ENCODE measurements at regions of chr14 and their contacts with region 1.

Region 1: DNA sequence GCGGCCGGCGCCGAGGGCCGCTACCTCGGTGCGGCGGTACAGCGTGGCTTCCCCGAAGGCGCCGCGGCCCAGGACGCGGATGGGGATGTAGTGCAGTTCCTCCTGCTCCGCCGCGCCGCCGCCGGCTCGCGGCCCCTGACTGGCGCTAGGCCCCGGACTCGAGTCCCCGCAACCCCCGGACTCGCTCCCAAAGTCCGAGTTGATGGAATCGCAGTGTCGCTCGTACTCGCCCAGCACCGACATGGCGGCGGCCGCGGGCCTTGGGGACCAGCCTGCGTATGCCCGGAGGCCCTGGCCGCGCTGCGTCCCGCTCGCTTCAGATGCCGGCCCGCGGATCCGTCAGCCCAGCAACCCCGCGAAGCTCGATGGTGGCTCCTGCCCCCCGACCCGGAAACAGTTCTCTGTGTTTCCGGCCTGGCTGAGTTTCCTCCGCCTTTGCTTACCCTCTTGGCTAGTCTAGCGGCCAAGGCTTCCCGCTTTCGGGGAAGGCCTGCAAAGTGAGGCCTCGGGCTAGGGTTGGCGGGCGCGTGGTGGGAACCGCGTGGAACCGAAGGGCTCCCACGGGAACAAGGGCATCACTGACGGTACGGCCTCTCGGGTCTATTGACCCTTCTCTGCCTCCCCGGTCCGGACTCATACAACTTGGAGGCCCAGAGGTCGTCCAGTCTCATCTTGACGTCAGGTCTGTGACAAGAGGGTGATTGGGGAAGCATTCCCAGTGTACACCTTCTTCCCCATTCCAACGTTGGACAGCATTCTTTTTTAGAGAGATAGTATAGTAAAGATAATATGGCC is at the start of gene NEK9:
- DNase-seq: peak; percentile 91 to 97
- H3K4me3 ChIP-seq: peak within 1 kb of the TSS; percentile 74 to 81 (median 76)
- H3K27ac ChIP-seq: peak within 1 kb of the TSS; percentile 94 to 98 (median 95)
- H3K4me1 ChIP-seq: peaks cover 26 to 48% (median 39%) of the 10 kb centered on the region in 4 donors
- H3K27me3 ChIP-seq: no peaks in the 10 kb centered on the region
- CTCF ChIP-seq: no peak
- EP300 ChIP-seq: no peak
- POLR2A ChIP-seq: no peak
- total RNA-seq, gene NEK9: 17.1 to 225 (median 49.1) TPM

Region 2: GRCh38 chr14:75063407-75064213 is 63.3 kb before region 1 on chr14 and contains the start of gene ACYP1:
- intact Hi-C with region 1: no loop called
- DNase-seq: peak; percentile 95 to 97
- H3K4me3 ChIP-seq: peak within 1 kb of the TSS; percentile 63 to 83 (median 75)
- H3K27ac ChIP-seq: peak within 1 kb of the TSS; percentile 75 to 87 (median 84)
- H3K4me1 ChIP-seq: peaks cover 12 to 34% (median 29%) of the 10 kb centered on the region in 4 donors
- H3K27me3 ChIP-seq: no peaks in the 10 kb centered on the region
- CTCF ChIP-seq: no peak
- EP300 ChIP-seq: no peak
- POLR2A ChIP-seq: no peak
- total RNA-seq, gene ACYP1: 7.9 to 27.7 (median 12.2) TPM in 3 of 5 donors, not detected in the others

Region 3: DNA sequence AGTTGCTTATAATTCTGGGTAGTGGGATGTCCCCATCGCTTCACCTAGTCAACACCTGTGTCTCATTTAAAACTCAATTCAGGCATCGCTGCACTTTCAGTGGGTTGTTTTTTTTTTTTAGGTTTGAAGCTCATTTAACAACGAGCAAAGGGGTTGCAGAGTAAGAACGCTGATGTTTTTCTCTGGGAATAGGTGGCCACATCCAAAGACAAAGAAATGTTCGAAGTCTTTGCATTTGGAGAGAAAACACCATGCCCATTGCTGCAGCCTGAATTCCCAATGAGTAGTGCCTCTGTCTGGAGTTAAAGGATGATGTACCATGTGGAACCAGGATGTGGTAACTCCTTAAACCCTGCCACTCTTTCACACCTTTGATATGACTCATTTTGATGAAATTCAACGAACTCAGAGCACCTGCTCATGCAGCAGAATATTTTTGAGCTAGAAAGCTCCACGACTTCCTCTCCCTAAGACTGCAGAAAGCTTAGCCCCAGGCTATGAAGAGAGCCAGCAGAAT is 360.3 kb after region 1 on chr14:
- intact Hi-C with region 1: loop called (anchors 10 kb)
- DNase-seq: no peak
- H3K4me3 ChIP-seq: no peak overlapping the region
- H3K27ac ChIP-seq: no peak overlapping the region
- H3K4me1 ChIP-seq: peaks cover 0 to 8% (median 0%) of the 10 kb centered on the region in 4 donors
- H3K27me3 ChIP-seq: no peaks in the 10 kb centered on the region
- CTCF ChIP-seq: no peak
- EP300 ChIP-seq: no peak
- POLR2A ChIP-seq: no peak

Measured in stomach (tissue), 19 donors.